Esophagus muscularis mucosa (tissue), 4 donors: ENCODE measurements at regions of chr2 and their contacts with region 1.

Region 1: GRCh38 chr2:112690853-112691401 is 29.9 kb upstream of the NT5DC4 start:
- DNase-seq: no peak
- H3K4me3 ChIP-seq: no peak overlapping the region
- H3K27ac ChIP-seq: no peak overlapping the region
- H3K4me1 ChIP-seq: peaks cover 0 to 8% (median 6%) of the 10 kb centered on the region in 4 donors
- H3K27me3 ChIP-seq: no peaks in the 10 kb centered on the region
- CTCF ChIP-seq: peak; percentile 53 to 78 (median 70)
- EP300 ChIP-seq: no peak
- POLR2A ChIP-seq: no peak

Region 2: GRCh38 chr2:112626604-112627059 is 64.3 kb before region 1 on chr2:
- intact Hi-C with region 1: loop called (anchors 2 kb)
- DNase-seq: no peak
- H3K4me3 ChIP-seq: peak overlapping the region; percentile 20 to 51 (median 33)
- H3K27ac ChIP-seq: peak overlapping the region; percentile 46 to 77 (median 68)
- H3K4me1 ChIP-seq: peaks cover 18 to 37% (median 27%) of the 10 kb centered on the region in 4 donors
- H3K27me3 ChIP-seq: no peaks in the 10 kb centered on the region
- CTCF ChIP-seq: peak; percentile 75 to 83 (median 82)
- EP300 ChIP-seq: no peak
- POLR2A ChIP-seq: no peak

Region 3: GRCh38 chr2:112728378-112729175 is 37.6 kb after region 1 on chr2:
- intact Hi-C with region 1: no loop called
- DNase-seq: peak; percentile 85
- H3K4me3 ChIP-seq: no peak overlapping the region
- H3K27ac ChIP-seq: no peak overlapping the region
- H3K4me1 ChIP-seq: peaks cover 0 to 12% (median 10%) of the 10 kb centered on the region in 4 donors
- H3K27me3 ChIP-seq: peaks cover 0 to 18% (median 0%) of the 10 kb centered on the region in 4 donors
- CTCF ChIP-seq: no peak
- EP300 ChIP-seq: no peak
- POLR2A ChIP-seq: no peak